Sciatic nerve (tissue), 2 donors: ENCODE measurements at regions of chr6 and their contacts with region 1.

Region 1: GRCh38 chr6:43143235-43144124 is 27.6 kb upstream of the SRF start:
- DNase-seq: peak; percentile 92
- ATAC-seq: peak; percentile 96

Region 2: DNA sequence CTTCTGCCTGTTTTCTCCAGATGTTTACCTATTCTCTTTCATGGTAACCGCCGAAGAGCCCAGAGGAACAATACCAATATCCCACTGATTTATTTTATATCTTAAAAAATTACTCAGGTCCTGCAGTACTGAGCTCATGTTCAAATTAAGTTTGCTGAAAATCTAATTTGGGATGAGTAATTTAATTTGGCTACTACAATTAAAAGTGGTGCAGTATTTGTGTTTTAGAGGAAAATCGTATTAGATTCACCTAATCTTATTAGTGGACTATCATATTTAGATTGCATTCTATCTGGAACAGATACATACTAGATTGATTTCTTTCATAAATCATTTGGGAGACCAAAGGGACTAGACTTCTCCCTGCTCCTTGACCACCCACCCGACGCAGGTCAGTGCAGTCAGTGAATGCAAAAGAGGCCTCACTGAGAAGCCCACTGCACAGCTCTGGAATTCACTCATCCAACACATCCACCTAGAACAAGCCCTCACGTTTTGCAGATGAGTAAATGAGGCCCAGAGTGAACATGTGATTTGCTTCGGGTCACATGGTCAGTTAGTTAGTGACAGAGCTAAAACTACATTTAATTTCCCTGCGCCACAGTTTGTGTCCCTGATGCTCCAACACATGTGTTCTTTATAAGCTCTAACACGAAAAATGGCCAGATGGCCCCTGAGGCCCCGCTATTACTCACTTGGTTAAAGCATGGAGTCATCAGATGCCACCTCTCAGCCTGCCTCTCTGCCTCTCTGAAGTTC is 793.5 kb before region 1 on chr6:
- intact Hi-C with region 1: no loop called
- DNase-seq: no peak
- ATAC-seq: no peak

Region 3: GRCh38 chr6:42901536-42901957 is 241.9 kb before region 1 on chr6:
- intact Hi-C with region 1: loop called (anchors 5 kb)
- DNase-seq: peak; percentile 79
- ATAC-seq: peak; percentile 95

Region 4: GRCh38 chr6:43361269-43361668 is 217.8 kb after region 1 on chr6:
- intact Hi-C with region 1: no loop called
- DNase-seq: no peak
- ATAC-seq: no peak